ENCODE measurements at regions of chr10 and their contacts with region 1.

Region 1: GRCh38 chr10:103244663-103245271 is 920 bp upstream of the RPEL1 start:
- DNase-seq: peak; percentile 69
- H3K4me3 Mint-ChIP-seq: no peak overlapping the region
- H3K27ac Mint-ChIP-seq: no peak overlapping the region
- H3K4me1 Mint-ChIP-seq: peaks cover 23% of the 10 kb centered on the region
- H3K27me3 Mint-ChIP-seq: peaks cover 5% of the 10 kb centered on the region

Region 2: DNA sequence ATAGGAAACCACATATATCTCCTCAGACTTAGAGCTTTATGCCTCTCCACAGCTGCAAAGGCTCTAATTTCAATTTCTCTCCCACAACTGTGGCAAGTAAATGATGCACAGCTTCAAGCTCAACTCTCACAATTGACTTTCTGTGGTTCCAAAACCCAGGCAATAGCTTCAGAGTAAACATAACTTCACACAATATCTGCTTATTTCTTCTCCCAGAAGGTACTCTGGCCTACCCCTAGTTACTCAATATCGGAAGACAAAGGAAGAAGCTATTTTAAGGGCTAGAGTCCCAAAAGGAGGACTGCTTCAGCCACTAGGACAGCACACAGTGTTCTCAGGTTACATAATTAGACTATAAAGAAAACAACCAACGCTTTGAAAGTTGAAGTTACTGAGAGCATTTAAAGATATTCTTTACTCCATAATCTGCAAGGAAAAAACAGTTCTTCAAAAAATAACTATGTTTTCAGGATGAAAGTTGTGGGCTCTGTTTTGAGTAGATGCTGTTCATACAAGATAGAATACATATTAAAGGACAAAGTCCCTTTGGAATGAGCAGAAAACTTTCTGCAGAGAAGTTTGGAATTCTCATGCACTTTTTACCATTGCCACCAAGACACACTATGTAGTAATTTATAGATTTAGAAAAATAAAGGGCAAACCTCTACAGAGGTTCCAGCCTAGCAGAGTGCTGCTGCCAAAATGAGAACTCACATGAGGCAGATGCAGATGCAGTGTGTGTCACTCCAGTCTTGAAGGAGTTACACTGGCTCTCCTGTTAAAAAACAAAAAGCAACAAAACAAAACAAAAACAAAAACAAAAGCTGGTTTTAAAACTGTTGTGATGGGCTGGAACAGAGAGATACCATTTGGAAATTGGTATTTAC is 133.5 kb before region 1 on chr10:
- CTCF ChIA-PET with region 1: interaction called, 12 read pairs
- POLR2A ChIA-PET with region 1: no interaction called
- DNase-seq: no peak
- H3K4me3 Mint-ChIP-seq: no peak overlapping the region
- H3K27ac Mint-ChIP-seq: no peak overlapping the region
- H3K4me1 Mint-ChIP-seq: peaks cover 20% of the 10 kb centered on the region
- H3K27me3 Mint-ChIP-seq: no peaks in the 10 kb centered on the region

Region 3: GRCh38 chr10:103139803-103140202 is 105.0 kb before region 1 on chr10:
- CTCF ChIA-PET with region 1: no interaction called
- POLR2A ChIA-PET with region 1: no interaction called
- DNase-seq: no peak
- H3K4me3 Mint-ChIP-seq: no peak overlapping the region
- H3K27ac Mint-ChIP-seq: no peak overlapping the region
- H3K4me1 Mint-ChIP-seq: peaks cover 2% of the 10 kb centered on the region
- H3K27me3 Mint-ChIP-seq: no peaks in the 10 kb centered on the region

Region 4: GRCh38 chr10:103231047-103231551 is 13.7 kb before region 1 on chr10:
- CTCF ChIA-PET with region 1: interaction called, 10 read pairs
- POLR2A ChIA-PET with region 1: no interaction called
- DNase-seq: no peak
- H3K4me3 Mint-ChIP-seq: no peak overlapping the region
- H3K27ac Mint-ChIP-seq: no peak overlapping the region
- H3K4me1 Mint-ChIP-seq: no peaks in the 10 kb centered on the region
- H3K27me3 Mint-ChIP-seq: peaks cover 9% of the 10 kb centered on the region

Region 5: GRCh38 chr10:103262229-103262628 is 17.5 kb after region 1 on chr10:
- CTCF ChIA-PET with region 1: no interaction called
- POLR2A ChIA-PET with region 1: no interaction called
- DNase-seq: no peak
- H3K4me3 Mint-ChIP-seq: no peak overlapping the region
- H3K27ac Mint-ChIP-seq: no peak overlapping the region
- H3K4me1 Mint-ChIP-seq: peaks cover 5% of the 10 kb centered on the region
- H3K27me3 Mint-ChIP-seq: peaks cover 16% of the 10 kb centered on the region

Measured in activated CD4-positive, alpha-beta memory T cell treated with anti-CD3 and anti-CD28 coated beads, Interleukin-2, amount 10 ng/mL, durations not matched to agents 7 days and 5 days (primary cell).